GM12878 (cell line): ENCODE measurements at regions of chr3 and their contacts with region 1.

Region 1: GRCh38 chr3:122299872-122300460 is 25.1 kb upstream of the CSTA start:
- DNase-seq: no peak
- ATAC-seq: peak; percentile 23; the same call in 1 of the 3 replicates
- H3K4me3 ChIP-seq: no peak overlapping the region
- H3K27ac ChIP-seq: peak overlapping the region; percentile 86
- H3K4me1 ChIP-seq: peaks cover 53% of the 10 kb centered on the region
- H3K27me3 ChIP-seq: no peaks in the 10 kb centered on the region
- CTCF ChIP-seq: peak; percentile 52 to 59 (median 57)
- EP300 ChIP-seq: no peak
- POLR2A ChIP-seq: no peak
- RAD21 ChIP-seq: peak; percentile 84

Region 2: DNA sequence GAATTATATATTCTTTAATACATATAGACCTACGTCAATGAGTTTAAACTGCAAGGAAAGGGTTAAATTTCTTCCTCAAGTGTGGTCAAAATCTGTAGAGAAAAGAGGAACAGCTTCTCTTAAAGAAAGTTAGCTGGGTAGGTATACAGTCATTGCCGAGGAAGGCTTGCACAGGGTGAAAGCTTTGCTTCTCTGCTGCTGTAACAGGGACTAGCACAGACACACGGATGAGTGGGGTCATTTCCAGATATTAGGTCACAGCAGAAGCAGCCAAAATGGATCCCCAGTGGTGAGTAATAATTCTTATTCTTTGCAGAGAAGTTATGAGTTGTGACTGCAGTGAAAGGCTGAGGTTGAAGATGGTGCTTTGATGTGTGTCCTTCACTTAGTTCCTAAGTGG is 244.8 kb before region 1 on chr3 and contains the start of gene CD86:
- CTCF ChIA-PET with region 1: no interaction called
- POLR2A ChIA-PET with region 1: no interaction called
- RAD21 ChIA-PET with region 1: interaction called, 3 read pairs
- SMC1A ChIA-PET with region 1: no interaction called
- in situ Hi-C with region 1: no loop called
- intact Hi-C with region 1: loop called (anchors 1 kb)
- DNase-seq: peak; percentile 77
- ATAC-seq: peak; percentile 92
- H3K4me3 ChIP-seq: peak within 1 kb of the TSS; percentile 61
- H3K27ac ChIP-seq: peak within 1 kb of the TSS; percentile 45
- H3K4me1 ChIP-seq: peaks cover 13% of the 10 kb centered on the region
- H3K27me3 ChIP-seq: no peaks in the 10 kb centered on the region
- CTCF ChIP-seq: no peak
- EP300 ChIP-seq: peak in 1 of 2 experiments; percentile 68; a peak in 1 of 4 replicates
- POLR2A ChIP-seq: peak; percentile 79
- RAD21 ChIP-seq: peak; percentile 14; the same call in 1 of the 2 replicates
- polyA plus RNA-seq, gene CD86: 68.0 to 79.5 TPM

Region 3: DNA sequence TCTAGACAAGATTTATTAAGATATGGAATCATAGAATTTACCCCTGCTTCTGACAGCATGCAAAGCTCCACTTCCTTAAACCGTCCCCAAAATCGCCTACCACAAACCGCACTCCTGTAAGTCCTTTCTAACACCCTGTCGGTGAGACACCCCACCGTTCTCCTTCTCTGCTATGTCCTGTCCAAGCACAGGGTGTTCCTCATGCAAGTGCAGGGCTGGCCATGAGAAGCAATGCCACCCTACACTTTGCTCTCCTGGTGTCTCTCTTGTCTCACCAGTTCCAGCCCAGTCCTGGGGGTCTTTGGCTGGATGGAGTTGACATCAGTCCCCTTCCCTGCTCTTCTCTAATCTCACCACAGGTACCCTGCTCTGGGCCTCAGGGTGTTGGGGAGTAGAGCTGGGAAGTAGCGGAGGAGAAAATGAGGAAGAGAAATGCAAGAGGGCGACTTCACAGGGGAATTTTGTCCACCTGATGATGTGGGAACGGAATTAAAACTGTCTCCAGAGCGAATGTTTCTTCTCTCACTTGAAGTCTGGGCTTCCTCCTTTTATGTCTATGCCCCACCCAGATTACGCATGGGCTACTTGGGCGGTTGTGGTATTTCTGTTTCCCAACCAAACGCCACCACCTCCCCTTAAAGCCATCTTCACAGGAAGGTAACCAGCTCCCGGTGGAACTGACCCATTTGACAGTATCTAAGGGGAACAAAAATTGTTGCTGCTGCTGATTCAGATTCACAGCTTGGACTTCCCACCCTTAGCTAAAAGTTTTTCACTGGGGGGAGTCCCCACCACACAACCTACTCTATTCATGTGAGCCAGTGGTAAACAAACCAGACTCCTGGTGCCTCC is 66.6 kb before region 1 on chr3:
- CTCF ChIA-PET with region 1: interaction called, 11 read pairs
- POLR2A ChIA-PET with region 1: interaction called, 5 read pairs
- RAD21 ChIA-PET with region 1: interaction called, 16 read pairs
- SMC1A ChIA-PET with region 1: interaction called, 18 read pairs
- in situ Hi-C with region 1: no loop called
- intact Hi-C with region 1: loop called (anchors 1 kb)
- DNase-seq: peak; percentile 86
- ATAC-seq: peak; percentile 83
- H3K4me3 ChIP-seq: 0 out of 2 replicates have a peak overlapping the region, but pooled peaks have one; percentile 13
- H3K27ac ChIP-seq: peak overlapping the region; percentile 86
- H3K4me1 ChIP-seq: peaks cover 38% of the 10 kb centered on the region
- H3K27me3 ChIP-seq: no peaks in the 10 kb centered on the region
- CTCF ChIP-seq: 0 out of 6 replicates have a peak, but pooled peaks of 1 of the 3 experiments have one; percentile 1
- EP300 ChIP-seq: peak; percentile 57 to 68; a peak in 3 of 4 replicates
- POLR2A ChIP-seq: no peak
- RAD21 ChIP-seq: no peak

Region 4: DNA sequence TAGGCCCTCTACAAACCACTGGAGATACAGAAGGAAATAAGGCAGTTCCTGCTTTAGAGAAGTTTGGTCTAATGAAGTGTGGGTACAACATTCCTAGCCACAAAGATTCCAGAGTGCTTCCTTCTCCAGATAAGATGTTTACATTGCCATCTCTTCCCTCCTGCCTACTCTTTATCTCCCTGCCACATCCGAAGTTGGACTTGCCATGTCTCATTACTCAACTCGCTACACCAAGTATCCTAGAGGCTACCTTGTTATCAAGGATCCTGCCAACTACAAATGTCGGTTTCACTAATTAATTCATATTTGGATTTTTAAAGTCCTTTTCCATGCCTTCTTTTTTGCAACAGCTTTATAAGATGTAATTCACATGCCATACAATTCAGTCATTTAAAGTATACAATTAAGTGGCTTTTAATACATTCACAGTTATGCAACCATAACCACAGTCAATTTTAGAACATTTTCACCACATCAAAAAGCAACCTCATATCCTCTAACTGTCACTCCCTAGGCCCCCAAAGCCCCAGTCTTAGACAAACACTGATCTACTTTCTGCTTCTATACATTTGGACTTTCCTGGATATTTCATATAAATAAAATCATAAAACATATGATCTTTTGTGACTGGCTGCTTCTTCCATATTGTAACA is 28.6 kb before region 1 on chr3:
- CTCF ChIA-PET with region 1: interaction called, 26 read pairs
- POLR2A ChIA-PET with region 1: interaction called, 6 read pairs
- RAD21 ChIA-PET with region 1: interaction called, 41 read pairs
- SMC1A ChIA-PET with region 1: interaction called, 204 read pairs
- in situ Hi-C with region 1: no loop called
- intact Hi-C with region 1: loop called (anchors 1 kb)
- DNase-seq: no peak
- ATAC-seq: peak; percentile 58
- H3K4me3 ChIP-seq: peak overlapping the region; percentile 17; the same call in 1 of the 2 replicates
- H3K27ac ChIP-seq: peak overlapping the region; percentile 43
- H3K4me1 ChIP-seq: peaks cover 38% of the 10 kb centered on the region
- H3K27me3 ChIP-seq: no peaks in the 10 kb centered on the region
- CTCF ChIP-seq: no peak
- EP300 ChIP-seq: peak in 1 of 2 experiments; percentile 85; a peak in 3 of 4 replicates
- POLR2A ChIP-seq: no peak
- RAD21 ChIP-seq: no peak

Region 5: GRCh38 chr3:122322095-122323075 is 22.4 kb after region 1 on chr3:
- CTCF ChIA-PET with region 1: interaction called, 80 read pairs
- POLR2A ChIA-PET with region 1: interaction called, 3 read pairs
- RAD21 ChIA-PET with region 1: interaction called, 12 read pairs
- SMC1A ChIA-PET with region 1: interaction called, 65 read pairs
- in situ Hi-C with region 1: no loop called
- intact Hi-C with region 1: no loop called
- DNase-seq: no peak
- ATAC-seq: peak; percentile 92
- H3K4me3 ChIP-seq: no peak overlapping the region
- H3K27ac ChIP-seq: peak overlapping the region; percentile 84
- H3K4me1 ChIP-seq: peaks cover 37% of the 10 kb centered on the region
- H3K27me3 ChIP-seq: no peaks in the 10 kb centered on the region
- CTCF ChIP-seq: no peak
- EP300 ChIP-seq: no peak; a peak in 1 of 4 replicates
- POLR2A ChIP-seq: no peak
- RAD21 ChIP-seq: no peak